Left ventricle myocardium inferior (tissue), 1 donor: ENCODE measurements at regions of chr11 and their contacts with region 1.

Region 1: GRCh38 chr11:46295312-46296058 is 18.0 kb downstream of the CREB3L1 start:
- DNase-seq: peak; percentile 81
- H3K4me3 ChIP-seq: peak overlapping the region; percentile 66
- H3K27ac ChIP-seq: peak overlapping the region; percentile 80
- H3K4me1 ChIP-seq: peaks cover 52% of the 10 kb centered on the region
- H3K27me3 ChIP-seq: peaks cover 7% of the 10 kb centered on the region
- CTCF ChIP-seq: no peak

Region 2: DNA sequence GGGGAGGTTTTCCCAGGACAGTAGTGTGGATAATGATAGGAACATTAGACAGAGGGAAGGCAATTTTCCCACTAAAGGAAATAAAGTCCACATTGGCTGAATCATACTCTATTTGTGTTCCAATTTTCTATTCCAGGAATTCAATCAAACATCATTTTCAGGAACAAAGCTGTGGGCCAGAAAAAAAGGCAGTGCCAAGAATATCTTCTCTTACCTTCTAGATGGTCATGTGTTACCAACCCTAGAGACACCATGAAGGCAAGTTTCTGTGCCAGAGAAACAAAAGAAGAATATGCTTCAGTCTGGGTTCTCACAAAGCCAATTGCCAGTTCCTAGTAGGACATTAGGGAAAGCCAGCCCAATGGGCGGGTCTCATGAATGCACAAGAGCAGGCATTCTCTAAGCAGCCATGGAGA is 345.5 kb before region 1 on chr11:
- intact Hi-C with region 1: no loop called
- DNase-seq: no peak
- H3K4me3 ChIP-seq: no peak overlapping the region
- H3K27ac ChIP-seq: no peak overlapping the region
- H3K4me1 ChIP-seq: peaks cover 22% of the 10 kb centered on the region
- H3K27me3 ChIP-seq: no peaks in the 10 kb centered on the region
- CTCF ChIP-seq: no peak

Region 3: GRCh38 chr11:46242916-46243795 is 52.3 kb before region 1 on chr11:
- intact Hi-C with region 1: loop called (anchors 10 kb)
- DNase-seq: peak; percentile 96
- H3K4me3 ChIP-seq: peak overlapping the region; percentile 68
- H3K27ac ChIP-seq: peak overlapping the region; percentile 92
- H3K4me1 ChIP-seq: peaks cover 34% of the 10 kb centered on the region
- H3K27me3 ChIP-seq: no peaks in the 10 kb centered on the region
- CTCF ChIP-seq: no peak